GM10248 (cell line): ENCODE measurements at regions of chr17 and their contacts with region 1.

Region 1: GRCh38 chr17:63946440-63947367 is 14.6 kb upstream of the CD79B start:
- DNase-seq: peak; percentile 90
- CTCF ChIP-seq: peak; percentile 79

Region 2: DNA sequence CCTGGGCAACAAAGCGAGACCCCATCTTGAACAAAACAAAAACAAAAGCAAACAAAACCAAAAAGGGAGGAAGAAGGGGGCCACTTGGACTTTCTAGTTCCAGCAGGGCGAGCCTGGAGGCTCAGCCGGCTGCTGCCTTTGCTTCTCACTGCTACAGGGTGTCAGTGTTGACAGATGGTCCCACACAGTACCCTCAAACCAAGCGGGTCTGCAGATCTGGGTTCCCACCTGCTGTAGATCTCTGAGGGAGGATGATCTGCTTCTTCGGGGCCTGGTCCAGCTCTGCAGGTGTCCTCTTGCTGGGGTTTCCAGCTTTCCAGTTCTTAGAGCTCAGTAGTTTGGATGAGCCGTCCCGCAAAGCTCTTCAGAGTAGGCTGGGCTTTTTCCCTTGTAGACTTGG is 42.4 kb before region 1 on chr17:
- CTCF ChIA-PET with region 1: interaction called, 26 read pairs
- POLR2A ChIA-PET with region 1: no interaction called
- DNase-seq: no peak
- CTCF ChIP-seq: no peak

Region 3: GRCh38 chr17:63919311-63919723 is 27.4 kb before region 1 on chr17:
- CTCF ChIA-PET with region 1: interaction called, 207 read pairs
- POLR2A ChIA-PET with region 1: interaction called, 11 read pairs
- DNase-seq: peak; percentile 85
- CTCF ChIP-seq: peak; percentile 89

Region 4: DNA sequence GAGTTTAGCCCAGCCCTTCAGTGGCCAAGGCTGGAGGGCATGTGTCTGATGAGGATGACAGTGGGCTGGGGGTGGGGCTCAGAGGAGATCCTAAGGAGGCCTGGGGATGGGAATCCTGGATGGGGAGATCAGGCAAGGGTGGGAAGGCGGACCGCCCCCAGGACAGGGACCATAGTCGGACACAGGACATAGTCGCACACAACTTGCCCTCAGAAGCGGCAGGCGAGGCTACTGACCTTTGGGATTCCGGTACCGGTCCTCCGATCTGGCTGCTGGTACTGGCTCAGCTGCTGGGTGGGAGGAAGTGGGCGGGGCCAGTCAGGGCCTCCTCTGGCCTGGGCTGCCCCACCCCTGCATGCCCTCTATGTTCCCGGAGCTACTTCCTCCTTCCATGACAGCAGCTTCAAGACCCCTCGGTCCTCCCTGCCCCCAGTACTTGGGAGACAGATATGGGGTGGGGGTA is 15.6 kb before region 1 on chr17:
- CTCF ChIA-PET with region 1: interaction called, 121 read pairs
- POLR2A ChIA-PET with region 1: no interaction called
- DNase-seq: peak; percentile 84
- CTCF ChIP-seq: no peak

Region 5: GRCh38 chr17:63974594-63975192 is 28.0 kb after region 1 on chr17:
- CTCF ChIA-PET with region 1: interaction called, 54 read pairs
- POLR2A ChIA-PET with region 1: no interaction called
- DNase-seq: no peak
- CTCF ChIP-seq: no peak

Region 6: DNA sequence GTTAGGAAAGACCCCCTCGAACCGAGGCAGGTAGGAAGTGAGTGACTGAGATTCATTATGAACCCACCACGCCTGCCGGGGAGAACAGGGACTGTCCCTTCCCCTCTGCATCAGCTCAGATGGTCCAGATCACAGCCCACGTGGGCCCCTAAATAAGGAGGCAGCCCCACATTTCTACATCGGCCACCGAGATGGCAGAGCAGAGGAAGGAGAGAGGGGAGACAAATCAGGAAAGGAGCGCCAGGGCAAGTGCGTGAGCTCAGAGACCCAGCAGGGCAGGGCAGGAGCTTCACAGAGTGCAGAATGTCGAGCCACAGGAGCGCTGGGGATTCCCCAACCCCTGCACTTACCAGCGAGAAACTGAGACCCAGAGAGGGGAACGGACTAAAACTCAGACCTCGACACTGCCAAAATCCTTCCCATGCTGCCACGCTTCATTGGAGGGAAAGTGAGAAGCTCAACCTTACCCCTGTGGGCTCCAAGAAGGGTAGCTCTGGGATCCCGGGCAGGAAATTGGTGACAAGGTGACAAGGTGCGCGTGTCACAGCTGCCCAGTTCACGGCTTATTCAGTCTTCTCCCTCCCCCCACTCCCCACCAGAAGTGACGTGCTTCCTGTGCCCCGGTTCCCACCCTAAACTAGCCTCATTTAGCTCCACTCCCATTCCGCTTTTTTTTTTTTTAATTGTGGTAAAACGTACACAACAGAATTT is 73.5 kb after region 1 on chr17 and contains the start of gene ICAM2:
- CTCF ChIA-PET with region 1: interaction called, 22 read pairs
- POLR2A ChIA-PET with region 1: interaction called, 5 read pairs
- DNase-seq: peak; percentile 70
- CTCF ChIP-seq: no peak